ENCODE measurements at regions of chr5 and their contacts with region 1.

Region 1: DNA sequence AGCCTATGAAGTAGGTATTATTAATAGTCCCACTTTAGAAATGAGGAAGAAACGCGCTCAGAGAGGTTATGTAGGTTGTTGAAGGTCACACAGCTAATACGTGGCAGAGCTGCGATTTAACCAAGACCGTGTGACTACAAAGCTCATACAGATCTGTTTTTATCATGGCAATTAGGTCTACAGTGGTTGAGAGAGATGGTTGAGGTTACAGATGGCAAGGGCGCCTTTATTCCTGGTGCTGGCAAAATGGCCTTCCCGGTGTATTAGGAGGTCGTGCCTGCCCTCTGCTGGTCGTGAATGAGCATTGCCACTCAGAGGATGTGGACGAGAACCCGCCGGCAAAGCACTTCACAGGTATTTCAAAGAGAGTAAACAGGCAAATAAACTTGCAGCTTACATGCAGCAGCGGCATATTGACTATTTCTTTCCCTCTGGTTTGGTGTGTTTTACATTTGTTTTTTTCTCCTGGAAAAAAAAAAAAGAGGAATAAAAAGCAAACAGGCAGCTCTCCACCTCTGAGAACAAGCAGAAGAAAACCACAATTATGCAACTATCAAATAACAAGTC is 65.3 kb upstream of the EGFLAM start:
- DNase-seq: peak; percentile 52 to 75
- H3K4me3 ChIP-seq: no peak overlapping the region
- H3K27ac ChIP-seq: no peak overlapping the region
- H3K4me1 ChIP-seq: no peaks in the 10 kb centered on the region
- H3K27me3 ChIP-seq: peaks cover 0 to 19% of the 10 kb centered on the region in 2 donors
- CTCF ChIP-seq: peak; percentile 83 to 85

Region 2: DNA sequence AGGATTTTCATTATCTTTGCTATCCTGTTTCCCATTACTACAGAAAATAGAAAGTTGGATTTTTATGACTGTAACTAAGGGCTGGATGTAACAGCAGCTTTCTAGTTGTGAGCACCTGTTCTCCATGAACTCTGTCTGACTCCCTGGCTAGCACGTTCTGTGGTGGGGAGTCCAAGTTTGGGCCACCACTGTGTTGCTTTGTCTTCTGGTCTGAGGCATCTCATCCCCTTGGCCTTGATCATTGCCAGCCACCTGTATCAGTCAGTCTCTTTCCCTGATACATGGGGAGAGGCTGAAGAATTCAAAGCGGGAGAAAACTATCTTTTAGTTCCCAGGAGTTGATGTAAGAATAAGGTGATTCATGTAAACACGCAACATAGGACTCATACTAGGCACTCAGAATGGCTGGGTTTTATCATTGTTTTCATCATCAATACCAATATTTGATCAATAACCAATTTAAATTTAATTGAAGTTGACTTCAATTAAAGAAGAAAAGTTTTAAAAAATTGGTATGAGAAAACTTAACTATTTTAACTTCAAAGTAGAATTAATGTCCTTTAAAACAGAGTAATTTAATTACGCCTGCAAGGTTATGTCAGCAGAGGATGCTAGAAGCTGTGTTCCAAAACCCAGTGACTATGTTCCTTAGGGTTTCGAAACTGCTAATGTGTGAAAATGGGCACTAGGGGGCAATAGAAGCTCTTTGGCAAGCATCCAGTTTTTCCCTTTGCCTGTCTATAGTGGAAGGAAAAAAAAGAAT is 780.4 kb before region 1 on chr5:
- intact Hi-C with region 1: loop called (anchors 10 kb)
- DNase-seq: peak in 1 of 2 donors; percentile 39
- H3K4me3 ChIP-seq: no peak overlapping the region
- H3K27ac ChIP-seq: no peak overlapping the region
- H3K4me1 ChIP-seq: no peaks in the 10 kb centered on the region
- H3K27me3 ChIP-seq: no peaks in the 10 kb centered on the region
- CTCF ChIP-seq: peak; percentile 75 to 78

Region 3: GRCh38 chr5:37837414-37838032 is 355.6 kb before region 1 on chr5:
- intact Hi-C with region 1: loop called (anchors 5 kb)
- DNase-seq: peak; percentile 64 to 78
- H3K4me3 ChIP-seq: peak overlapping the region; percentile 40 to 51
- H3K27ac ChIP-seq: no peak overlapping the region
- H3K4me1 ChIP-seq: peaks cover 0 to 61% (median 50%) of the 10 kb centered on the region in 4 donors
- H3K27me3 ChIP-seq: peaks cover 0 to 96% of the 10 kb centered on the region in 2 donors
- CTCF ChIP-seq: peak; percentile 73 to 74